MCF 10A (cell line): ENCODE measurements at regions of chr15 and their contacts with region 1.

Region 1: DNA sequence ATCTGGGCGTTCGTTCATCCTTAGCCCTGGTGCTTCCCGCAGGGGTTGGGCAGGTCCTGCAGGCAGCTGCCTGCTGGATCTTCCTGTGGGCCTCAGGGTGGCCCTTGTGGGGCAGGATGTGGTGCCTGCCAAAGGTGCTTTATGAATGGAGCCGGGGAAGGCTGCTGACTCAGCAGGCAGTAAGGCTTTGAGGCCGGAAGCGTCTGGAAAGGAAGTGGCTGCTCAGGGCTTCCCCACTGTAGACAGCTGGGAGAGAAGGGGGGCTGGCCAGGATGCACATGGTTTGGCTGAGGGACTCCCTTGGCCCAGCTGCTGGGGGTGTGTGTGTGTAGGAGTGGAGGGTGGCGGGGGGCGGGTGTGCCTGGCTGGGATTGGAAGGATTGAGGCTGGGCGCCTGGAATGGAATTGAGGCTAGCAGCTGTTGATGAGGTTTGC is 12.9 kb downstream of the CD276 start:
- DNase-seq: peak; percentile 89
- H3K4me3 Mint-ChIP-seq: peak overlapping the region; percentile 39
- H3K27ac Mint-ChIP-seq: peak overlapping the region; percentile 72
- H3K4me1 Mint-ChIP-seq: peaks cover 58% of the 10 kb centered on the region
- H3K27me3 Mint-ChIP-seq: no peaks in the 10 kb centered on the region
- CTCF ChIP-seq: no peak

Region 2: DNA sequence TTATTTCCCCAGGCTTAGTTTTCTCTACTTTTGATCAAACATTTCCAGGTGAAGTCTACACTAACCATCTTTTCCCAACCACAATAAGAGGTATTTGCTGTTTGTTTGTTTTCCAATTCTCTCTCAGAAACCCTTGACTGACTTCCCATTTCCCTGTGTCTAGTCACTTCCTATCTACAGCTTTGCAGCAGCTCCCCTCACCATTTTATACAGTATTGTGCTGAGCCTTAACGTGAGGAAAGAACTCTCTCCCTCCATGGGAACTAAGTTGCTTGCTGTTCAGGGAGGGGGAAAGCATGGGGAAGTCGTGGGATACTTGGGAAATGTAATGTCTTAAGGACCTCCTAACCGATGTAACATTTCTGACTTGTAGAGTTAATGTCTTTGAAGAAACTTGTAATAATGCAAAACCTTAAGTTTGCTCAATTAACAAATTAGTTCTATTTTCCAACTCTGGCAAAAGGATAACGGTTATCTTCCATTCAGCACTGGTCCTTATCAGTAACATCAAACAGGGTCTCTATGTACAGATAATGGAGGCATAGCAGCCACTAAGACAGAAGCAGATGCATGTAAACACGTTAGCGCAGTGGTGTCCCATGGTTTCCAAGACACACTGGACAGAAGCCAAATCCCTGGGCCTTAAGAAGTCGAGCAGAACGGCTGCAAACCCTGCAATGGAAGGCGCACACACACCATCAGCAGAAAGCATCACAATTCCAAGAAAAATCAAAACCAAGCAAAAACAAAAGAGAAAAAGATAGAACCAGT is 103.6 kb before region 1 on chr15:
- CTCF ChIA-PET with region 1: interaction called, 3 read pairs
- POLR2A ChIA-PET with region 1: no interaction called
- intact Hi-C with region 1: loop called (anchors 1 kb)
- DNase-seq: no peak
- H3K4me3 Mint-ChIP-seq: no peak overlapping the region
- H3K27ac Mint-ChIP-seq: no peak overlapping the region
- H3K4me1 Mint-ChIP-seq: peaks cover 23% of the 10 kb centered on the region
- H3K27me3 Mint-ChIP-seq: no peaks in the 10 kb centered on the region
- CTCF ChIP-seq: no peak

Region 3: GRCh38 chr15:73677146-73677607 is 19.9 kb before region 1 on chr15:
- CTCF ChIA-PET with region 1: interaction called, 98 read pairs
- POLR2A ChIA-PET with region 1: interaction called, 4 read pairs
- intact Hi-C with region 1: loop called (anchors 1 kb)
- DNase-seq: peak; percentile 80
- H3K4me3 Mint-ChIP-seq: no peak overlapping the region
- H3K27ac Mint-ChIP-seq: no peak overlapping the region
- H3K4me1 Mint-ChIP-seq: peaks cover 2% of the 10 kb centered on the region
- H3K27me3 Mint-ChIP-seq: no peaks in the 10 kb centered on the region
- CTCF ChIP-seq: peak; percentile 81

Region 4: GRCh38 chr15:73711526-73711925 is 14.5 kb after region 1 on chr15:
- CTCF ChIA-PET with region 1: interaction called, 15 read pairs
- POLR2A ChIA-PET with region 1: interaction called, 3 read pairs
- intact Hi-C with region 1: no loop called
- DNase-seq: no peak
- H3K4me3 Mint-ChIP-seq: no peak overlapping the region
- H3K27ac Mint-ChIP-seq: no peak overlapping the region
- H3K4me1 Mint-ChIP-seq: no peaks in the 10 kb centered on the region
- H3K27me3 Mint-ChIP-seq: no peaks in the 10 kb centered on the region
- CTCF ChIP-seq: no peak

Region 5: GRCh38 chr15:73908030-73908821 is 211.2 kb after region 1 on chr15:
- CTCF ChIA-PET with region 1: no interaction called
- POLR2A ChIA-PET with region 1: no interaction called
- intact Hi-C with region 1: loop called (anchors 5 kb)
- DNase-seq: peak; percentile 64
- H3K4me3 Mint-ChIP-seq: no peak overlapping the region
- H3K27ac Mint-ChIP-seq: no peak overlapping the region
- H3K4me1 Mint-ChIP-seq: no peaks in the 10 kb centered on the region
- H3K27me3 Mint-ChIP-seq: peaks cover 40% of the 10 kb centered on the region
- CTCF ChIP-seq: peak; percentile 93